ENCODE measurements at regions of chr5 and their contacts with region 1.

Region 1: DNA sequence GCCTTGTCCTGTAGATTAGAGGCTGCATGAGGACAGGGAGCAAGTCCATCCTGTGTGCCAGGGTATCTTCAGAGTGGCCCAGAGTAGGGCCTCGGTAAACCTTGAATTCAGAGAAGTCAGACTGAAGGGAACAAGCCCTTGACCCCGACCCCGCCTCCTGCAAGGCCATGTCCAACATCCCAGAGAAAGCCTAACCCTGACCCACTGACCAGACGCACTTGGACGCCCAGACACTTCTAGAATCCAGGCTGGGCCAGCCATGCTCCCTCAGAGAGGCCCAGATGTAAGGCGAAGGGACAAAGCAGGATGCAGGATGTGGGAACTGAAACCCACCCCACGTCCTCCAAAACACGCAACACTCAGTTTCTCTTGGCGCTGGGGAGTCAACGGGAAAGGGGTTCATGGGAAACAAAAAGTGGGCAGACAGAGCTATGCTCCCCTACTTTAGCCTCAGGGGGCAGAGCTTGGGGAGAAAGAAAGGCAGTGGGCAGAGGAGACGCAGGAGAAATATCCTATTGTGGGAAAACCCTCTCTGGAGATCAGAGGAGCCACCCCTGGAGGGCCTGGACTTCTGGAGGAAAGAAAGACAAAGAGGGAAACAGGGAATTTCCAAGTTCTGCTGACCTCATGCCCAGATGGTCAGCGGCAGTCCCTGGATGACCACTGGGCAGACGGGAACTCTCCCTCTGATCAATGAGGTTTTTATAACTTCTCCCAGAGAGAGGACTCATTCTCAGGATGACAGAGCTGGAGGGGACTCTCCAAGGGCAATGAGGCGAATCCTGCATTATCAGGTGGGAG is 13.0 kb downstream of the TNIP1 start:
- DNase-seq: no peak

Region 2: GRCh38 chr5:150734579-150735384 is 333.1 kb before region 1 on chr5:
- intact Hi-C with region 1: no loop called
- DNase-seq: peak; percentile 83

Region 3: GRCh38 chr5:151093476-151093889 is 25.7 kb after region 1 on chr5:
- intact Hi-C with region 1: loop called in 1 of 2 experiments (anchors 1 kb)
- DNase-seq: no peak

Measured in posterior vena cava (tissue), 2 donors.